ENCODE measurements at regions of chr19 and their contacts with region 1.

Region 1: GRCh38 chr19:54239051-54239450 is 3.5 kb downstream of the LILRA6 start:
- DNase-seq: no peak
- H3K4me3 ChIP-seq: no peak overlapping the region
- H3K27ac ChIP-seq: no peak overlapping the region
- H3K4me1 ChIP-seq: no peaks in the 10 kb centered on the region
- H3K27me3 ChIP-seq: peaks cover 34% of the 10 kb centered on the region
- CTCF ChIP-seq: no peak

Region 2: DNA sequence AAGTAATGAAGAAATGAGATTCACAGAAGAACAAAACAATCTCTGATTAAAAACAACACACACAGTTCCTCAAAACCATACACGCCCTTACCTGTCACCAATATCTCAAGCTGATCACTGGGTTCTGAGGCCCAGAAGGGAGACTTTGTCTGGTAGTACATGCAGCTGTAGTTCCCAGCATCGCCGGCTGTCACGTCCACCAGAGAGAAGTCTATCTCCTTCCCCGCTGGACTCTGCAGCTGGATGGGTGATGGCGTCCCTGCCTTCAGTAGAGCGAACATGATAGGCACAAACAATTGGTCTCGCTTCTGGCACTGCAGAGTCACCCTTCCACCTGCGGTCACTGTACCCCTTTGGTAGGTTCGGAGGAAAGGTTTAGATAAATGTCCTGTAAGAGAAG is 165.2 kb before region 1 on chr19:
- CTCF ChIA-PET with region 1: no interaction called
- POLR2A ChIA-PET with region 1: no interaction called
- intact Hi-C with region 1: no loop called
- DNase-seq: no peak
- H3K4me3 ChIP-seq: no peak overlapping the region
- H3K27ac ChIP-seq: no peak overlapping the region
- H3K4me1 ChIP-seq: no peaks in the 10 kb centered on the region
- H3K27me3 ChIP-seq: no peaks in the 10 kb centered on the region
- CTCF ChIP-seq: no peak

Region 3: DNA sequence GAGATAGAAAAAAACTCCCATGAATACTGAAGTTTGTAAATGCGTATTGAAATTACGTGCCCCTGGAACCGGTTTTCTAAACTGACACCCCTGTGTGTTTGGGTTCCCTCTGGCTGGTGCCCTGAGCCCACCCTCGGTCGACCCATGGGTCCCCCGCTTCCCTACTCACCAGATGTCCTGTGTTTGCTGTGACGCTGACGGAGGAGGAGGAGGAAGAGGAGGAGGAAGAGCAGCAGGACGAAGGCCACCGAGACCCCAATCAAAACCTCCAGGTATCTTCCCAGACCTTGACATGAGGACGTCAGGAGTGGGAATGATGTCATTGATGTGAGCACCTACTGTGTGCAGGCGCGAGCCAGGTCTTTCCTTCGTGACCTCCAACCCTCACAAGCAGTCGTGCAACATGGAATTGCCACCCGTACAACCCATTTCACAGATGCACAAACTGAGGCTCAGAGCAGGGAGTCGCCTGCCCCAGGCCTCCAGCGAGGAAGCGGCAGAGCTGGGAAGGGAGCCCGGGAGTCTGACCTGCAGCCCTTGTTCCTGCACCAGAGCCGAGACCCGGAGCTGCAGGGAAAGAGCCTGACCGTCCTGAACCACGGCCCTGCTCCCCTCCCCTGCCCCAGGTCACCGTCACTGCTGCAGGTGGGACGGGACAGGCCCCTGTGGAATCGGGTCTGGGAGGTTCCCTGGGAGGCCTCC is 19.9 kb before region 1 on chr19:
- CTCF ChIA-PET with region 1: no interaction called
- POLR2A ChIA-PET with region 1: no interaction called
- intact Hi-C with region 1: loop called (anchors 2 kb)
- DNase-seq: no peak
- H3K4me3 ChIP-seq: no peak overlapping the region
- H3K27ac ChIP-seq: no peak overlapping the region
- H3K4me1 ChIP-seq: no peaks in the 10 kb centered on the region
- H3K27me3 ChIP-seq: no peaks in the 10 kb centered on the region
- CTCF ChIP-seq: no peak